ENCODE measurements at regions of chr16 and their contacts with region 1.

Region 1: DNA sequence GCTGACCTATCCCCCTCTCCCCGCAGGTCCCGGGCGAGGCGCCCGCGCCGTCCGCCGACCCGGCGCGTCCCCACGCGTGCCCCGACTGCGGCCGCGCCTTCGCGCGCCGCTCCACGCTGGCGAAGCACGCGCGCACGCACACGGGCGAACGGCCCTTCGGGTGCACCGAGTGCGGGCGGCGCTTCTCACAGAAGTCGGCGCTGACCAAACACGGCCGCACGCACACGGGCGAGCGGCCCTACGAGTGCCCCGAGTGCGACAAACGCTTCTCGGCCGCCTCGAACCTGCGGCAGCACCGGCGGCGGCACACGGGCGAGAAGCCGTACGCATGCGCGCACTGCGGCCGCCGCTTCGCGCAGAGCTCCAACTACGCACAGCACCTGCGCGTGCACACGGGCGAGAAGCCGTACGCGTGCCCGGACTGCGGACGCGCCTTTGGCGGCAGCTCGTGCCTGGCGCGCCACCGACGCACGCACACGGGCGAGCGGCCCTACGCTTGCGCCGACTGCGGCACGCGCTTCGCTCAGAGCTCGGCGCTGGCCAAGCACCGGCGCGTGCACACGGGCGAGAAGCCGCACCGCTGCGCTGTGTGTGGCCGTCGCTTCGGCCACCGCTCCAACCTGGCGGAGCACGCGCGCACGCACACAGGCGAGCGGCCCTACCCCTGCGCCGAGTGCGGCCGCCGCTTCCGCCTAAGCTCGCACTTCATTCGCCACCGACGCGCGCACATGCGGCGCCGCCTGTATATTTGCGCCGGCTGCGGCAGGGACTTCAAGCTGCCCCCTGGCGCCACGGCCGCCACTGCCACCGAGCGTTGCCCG is 10.3 kb downstream of the ZNF771 start:
- DNase-seq: peak; percentile 77 to 98 (median 88)
- ATAC-seq: peak; percentile 85
- H3K4me3 ChIP-seq: peak overlapping the region; percentile 53
- H3K4me3 Mint-ChIP-seq: peak overlapping the region; percentile 80
- H3K27ac ChIP-seq: peak overlapping the region; percentile 73
- H3K27ac Mint-ChIP-seq: peak overlapping the region; percentile 86
- H3K4me1 ChIP-seq: peaks cover 16% of the 10 kb centered on the region
- H3K4me1 Mint-ChIP-seq: peaks cover 21% of the 10 kb centered on the region
- H3K27me3 ChIP-seq: no peaks in the 10 kb centered on the region
- H3K27me3 Mint-ChIP-seq: no peaks in the 10 kb centered on the region
- CTCF ChIP-seq: no peak

Region 2: DNA sequence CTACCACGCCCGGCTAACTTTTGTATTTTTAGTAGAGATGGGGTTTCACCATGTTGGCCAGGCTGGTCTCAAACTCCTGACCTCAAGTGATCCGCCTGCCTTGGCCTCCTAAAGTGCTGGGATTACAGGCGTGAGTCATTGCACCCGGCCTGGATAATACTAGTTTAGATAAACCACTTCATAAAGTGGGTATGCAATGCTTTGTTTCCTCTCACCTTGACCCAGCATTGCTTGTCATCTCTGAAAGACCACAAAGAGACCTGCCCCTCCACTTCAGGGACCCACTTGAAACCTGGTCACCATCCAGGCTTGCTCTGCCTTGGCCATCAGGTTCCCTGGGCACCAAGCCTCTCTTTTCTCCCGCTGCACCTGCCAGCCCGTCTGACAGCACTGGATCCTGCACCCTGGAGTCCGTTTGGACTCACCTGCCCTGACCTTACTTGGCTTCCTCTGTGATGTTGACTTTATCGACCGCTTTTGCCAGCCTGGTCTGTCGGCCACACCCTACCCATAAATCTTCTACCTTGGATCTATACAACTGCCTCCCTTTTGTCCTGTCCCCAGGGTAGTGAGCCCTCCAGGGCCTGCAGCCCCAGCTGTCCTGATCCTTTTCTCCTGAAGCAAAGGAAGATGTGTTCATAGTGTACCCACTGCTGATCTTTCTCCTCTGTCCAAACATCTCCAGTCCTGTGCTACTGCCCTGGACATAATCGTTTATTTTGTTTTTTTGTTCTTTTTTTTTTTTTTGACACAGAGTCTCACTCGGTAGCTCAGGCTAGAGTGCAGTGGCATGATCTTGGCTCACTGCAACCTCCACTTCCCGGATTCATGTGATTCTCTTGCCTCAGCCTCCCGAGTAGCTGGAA is 652.3 kb before region 1 on chr16:
- CTCF ChIA-PET with region 1: no interaction called
- POLR2A ChIA-PET with region 1: no interaction called
- intact Hi-C with region 1: no loop called
- DNase-seq: no peak
- ATAC-seq: no peak
- H3K4me3 ChIP-seq: no peak overlapping the region
- H3K4me3 Mint-ChIP-seq: no peak overlapping the region
- H3K27ac ChIP-seq: no peak overlapping the region
- H3K27ac Mint-ChIP-seq: peak overlapping the region; percentile 40
- H3K4me1 ChIP-seq: peaks cover 8% of the 10 kb centered on the region
- H3K4me1 Mint-ChIP-seq: peaks cover 15% of the 10 kb centered on the region
- H3K27me3 ChIP-seq: no peaks in the 10 kb centered on the region
- H3K27me3 Mint-ChIP-seq: no peaks in the 10 kb centered on the region
- CTCF ChIP-seq: no peak

Region 3: GRCh38 chr16:29961479-29962343 is 456.0 kb before region 1 on chr16 and contains the start of gene TMEM219:
- CTCF ChIA-PET with region 1: no interaction called
- POLR2A ChIA-PET with region 1: no interaction called
- intact Hi-C with region 1: no loop called
- DNase-seq: peak; percentile 87 to 97 (median 94)
- ATAC-seq: peak; percentile 83
- H3K4me3 ChIP-seq: peak within 1 kb of the TSS; percentile 88
- H3K4me3 Mint-ChIP-seq: peak within 1 kb of the TSS; percentile 93
- H3K27ac ChIP-seq: peak within 1 kb of the TSS; percentile 77 to 92
- H3K27ac Mint-ChIP-seq: peak within 1 kb of the TSS; percentile 91
- H3K4me1 ChIP-seq: peaks cover 23% of the 10 kb centered on the region
- H3K4me1 Mint-ChIP-seq: peaks cover 31% of the 10 kb centered on the region
- H3K27me3 ChIP-seq: no peaks in the 10 kb centered on the region
- H3K27me3 Mint-ChIP-seq: no peaks in the 10 kb centered on the region
- CTCF ChIP-seq: peak; percentile 32
- total RNA-seq, gene TMEM219: 56.9 to 63.3 TPM

Region 4: GRCh38 chr16:30183233-30184095 is 234.3 kb before region 1 on chr16 and contains the start of gene CORO1A:
- CTCF ChIA-PET with region 1: no interaction called
- POLR2A ChIA-PET with region 1: interaction called, 16 read pairs
- intact Hi-C with region 1: no loop called
- DNase-seq: peak; percentile 68 to 90 (median 82)
- ATAC-seq: peak; percentile 45
- H3K4me3 ChIP-seq: peak within 1 kb of the TSS; percentile 100
- H3K4me3 Mint-ChIP-seq: peak within 1 kb of the TSS; percentile 99
- H3K27ac ChIP-seq: peak within 1 kb of the TSS; percentile 89 to 96
- H3K27ac Mint-ChIP-seq: peak within 1 kb of the TSS; percentile 98
- H3K4me1 ChIP-seq: peaks cover 51% of the 10 kb centered on the region
- H3K4me1 Mint-ChIP-seq: peaks cover 39% of the 10 kb centered on the region
- H3K27me3 ChIP-seq: no peaks in the 10 kb centered on the region
- H3K27me3 Mint-ChIP-seq: no peaks in the 10 kb centered on the region
- CTCF ChIP-seq: no peak
- total RNA-seq, gene CORO1A: 411 to 416 TPM

Region 5: GRCh38 chr16:30378236-30379204 is 39.2 kb before region 1 on chr16:
- CTCF ChIA-PET with region 1: no interaction called
- POLR2A ChIA-PET with region 1: interaction called, 41 read pairs
- intact Hi-C with region 1: no loop called
- DNase-seq: peak; percentile 98 to 100 (median 100)
- ATAC-seq: peak; percentile 74
- H3K4me3 ChIP-seq: peak overlapping the region; percentile 71
- H3K4me3 Mint-ChIP-seq: peak overlapping the region; percentile 99
- H3K27ac ChIP-seq: peak overlapping the region; percentile 100
- H3K27ac Mint-ChIP-seq: peak overlapping the region; percentile 100
- H3K4me1 ChIP-seq: peaks cover 79% of the 10 kb centered on the region
- H3K4me1 Mint-ChIP-seq: peaks cover 60% of the 10 kb centered on the region
- H3K27me3 ChIP-seq: no peaks in the 10 kb centered on the region
- H3K27me3 Mint-ChIP-seq: no peaks in the 10 kb centered on the region
- CTCF ChIP-seq: no peak

Region 6: GRCh38 chr16:30458561-30459394 is 41.0 kb after region 1 on chr16:
- CTCF ChIA-PET with region 1: no interaction called
- POLR2A ChIA-PET with region 1: interaction called, 14 read pairs
- intact Hi-C with region 1: no loop called
- DNase-seq: peak in 13 of 14 experiments; percentile 49 to 93 (median 71)
- ATAC-seq: peak; percentile 94
- H3K4me3 ChIP-seq: peak overlapping the region; percentile 13
- H3K4me3 Mint-ChIP-seq: peak overlapping the region; percentile 60
- H3K27ac ChIP-seq: peak overlapping the region; percentile 55 to 61
- H3K27ac Mint-ChIP-seq: peak overlapping the region; percentile 91
- H3K4me1 ChIP-seq: peaks cover 37% of the 10 kb centered on the region
- H3K4me1 Mint-ChIP-seq: peaks cover 55% of the 10 kb centered on the region
- H3K27me3 ChIP-seq: no peaks in the 10 kb centered on the region
- H3K27me3 Mint-ChIP-seq: no peaks in the 10 kb centered on the region
- CTCF ChIP-seq: no peak

Region 7: GRCh38 chr16:30557957-30558788 is 140.4 kb after region 1 on chr16 and contains the start of gene ZNF764:
- CTCF ChIA-PET with region 1: no interaction called
- POLR2A ChIA-PET with region 1: interaction called, 11 read pairs
- intact Hi-C with region 1: no loop called
- DNase-seq: peak; percentile 90 to 99 (median 95)
- ATAC-seq: peak; percentile 89
- H3K4me3 ChIP-seq: peak within 1 kb of the TSS; percentile 73
- H3K4me3 Mint-ChIP-seq: peak within 1 kb of the TSS; percentile 93
- H3K27ac ChIP-seq: peak within 1 kb of the TSS; percentile 93 to 94
- H3K27ac Mint-ChIP-seq: peak within 1 kb of the TSS; percentile 94
- H3K4me1 ChIP-seq: peaks cover 68% of the 10 kb centered on the region
- H3K4me1 Mint-ChIP-seq: peaks cover 41% of the 10 kb centered on the region
- H3K27me3 ChIP-seq: no peaks in the 10 kb centered on the region
- H3K27me3 Mint-ChIP-seq: no peaks in the 10 kb centered on the region
- CTCF ChIP-seq: no peak
- total RNA-seq, gene ZNF764: 20.4 to 22.9 TPM

Region 8: DNA sequence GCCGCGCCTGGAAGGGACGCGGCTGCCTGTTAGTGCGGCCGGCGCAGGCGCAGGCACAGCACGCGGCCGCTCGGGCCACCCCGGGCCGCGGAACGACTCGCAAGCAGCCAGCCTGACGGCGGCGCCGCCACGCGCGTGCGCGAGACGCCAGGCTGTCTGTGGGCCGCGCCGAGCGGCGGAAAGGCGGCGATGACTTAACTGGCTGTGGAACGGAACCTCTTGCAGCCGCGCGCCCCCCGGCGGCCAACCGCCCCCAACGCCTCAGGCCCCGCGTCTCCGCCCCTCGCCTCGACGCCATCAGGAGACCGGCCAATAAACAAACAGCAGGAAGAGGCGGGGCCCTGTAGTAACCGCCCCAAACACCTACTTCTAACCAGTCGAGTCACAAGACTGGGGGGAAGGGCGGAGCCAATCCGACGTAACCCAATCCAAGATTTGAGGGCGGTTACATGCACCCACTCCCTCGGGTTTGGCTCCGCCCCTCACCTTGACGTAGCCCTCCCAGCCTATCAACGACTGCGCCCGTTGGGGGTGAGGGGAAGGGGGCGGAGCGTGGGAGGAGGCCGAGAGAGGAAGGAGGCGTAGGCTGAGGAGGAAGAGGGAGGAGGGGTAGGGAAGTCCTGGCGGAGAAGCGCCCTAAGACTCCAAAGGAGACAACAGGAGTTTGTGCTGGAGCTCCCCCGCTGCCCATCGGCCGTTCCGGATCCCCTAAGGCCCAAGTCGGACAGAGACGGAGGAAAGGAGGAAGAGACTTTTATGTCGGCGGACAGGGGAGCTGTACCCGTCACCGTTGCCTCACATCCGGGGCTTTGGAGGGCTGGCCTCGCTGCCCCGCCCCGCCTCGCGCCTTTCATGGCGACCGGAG is 240.4 kb after region 1 on chr16 and contains the start of gene FBRS:
- CTCF ChIA-PET with region 1: no interaction called
- POLR2A ChIA-PET with region 1: interaction called, 21 read pairs
- intact Hi-C with region 1: no loop called
- DNase-seq: peak; percentile 99 to 100 (median 100)
- ATAC-seq: peak; percentile 74
- H3K4me3 ChIP-seq: peak within 1 kb of the TSS; percentile 93
- H3K4me3 Mint-ChIP-seq: peak within 1 kb of the TSS; percentile 94
- H3K27ac ChIP-seq: peak within 1 kb of the TSS; percentile 99
- H3K27ac Mint-ChIP-seq: peak within 1 kb of the TSS; percentile 99
- H3K4me1 ChIP-seq: peaks cover 51% of the 10 kb centered on the region
- H3K4me1 Mint-ChIP-seq: peaks cover 44% of the 10 kb centered on the region
- H3K27me3 ChIP-seq: no peaks in the 10 kb centered on the region
- H3K27me3 Mint-ChIP-seq: no peaks in the 10 kb centered on the region
- CTCF ChIP-seq: peak; percentile 78
- total RNA-seq, gene FBRS: 162 to 163 TPM